ENCODE measurements at regions of chr20 and their contacts with region 1.

Region 1: DNA sequence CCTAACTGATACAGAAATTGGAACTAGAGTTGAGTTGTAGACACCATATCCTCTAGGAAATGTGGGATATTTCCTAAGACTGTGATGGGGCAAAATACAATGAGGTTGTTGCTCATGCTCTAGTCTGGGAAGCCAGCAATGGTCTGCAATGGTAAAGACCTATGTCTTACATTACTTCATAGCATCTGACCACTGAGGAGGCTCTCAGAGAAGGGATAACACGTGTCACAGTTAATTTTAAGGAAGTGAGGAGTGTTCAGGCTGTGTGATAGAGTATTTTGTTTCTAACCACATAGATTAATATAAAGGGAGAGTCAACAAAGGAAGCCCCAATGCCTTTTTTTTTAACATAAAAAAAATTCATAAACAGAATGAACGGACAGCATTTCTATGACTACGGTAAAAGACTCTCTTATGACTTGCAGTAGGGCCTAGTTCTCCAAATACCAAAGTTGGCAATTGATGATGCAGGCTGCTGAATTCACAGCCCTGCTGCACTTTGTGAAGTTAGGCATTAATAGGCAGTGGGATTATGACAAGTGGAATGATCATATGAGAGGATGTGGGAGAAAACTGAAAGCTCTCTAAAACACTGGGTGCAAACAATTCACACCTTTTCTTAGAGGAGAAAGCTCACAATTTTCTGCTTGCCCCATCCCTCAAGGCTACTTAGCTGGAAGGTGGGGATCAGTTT is 13.7 kb downstream of the KCNS1 start:
- DNase-seq: no peak
- ATAC-seq: no peak
- H3K4me3 ChIP-seq: no peak overlapping the region
- H3K27ac ChIP-seq: no peak overlapping the region
- H3K4me1 ChIP-seq: no peaks in the 10 kb centered on the region
- H3K27me3 ChIP-seq: no peaks in the 10 kb centered on the region
- CTCF ChIP-seq: no peak

Region 2: GRCh38 chr20:45011108-45011526 is 76.1 kb before region 1 on chr20:
- CTCF ChIA-PET with region 1: interaction called, 11 read pairs
- POLR2A ChIA-PET with region 1: no interaction called
- in situ Hi-C with region 1: no loop called
- intact Hi-C with region 1: loop called (anchors 10 kb)
- DNase-seq: peak; percentile 38
- ATAC-seq: peak; percentile 92
- H3K4me3 ChIP-seq: no peak overlapping the region
- H3K27ac ChIP-seq: no peak overlapping the region
- H3K4me1 ChIP-seq: 0 out of 2 replicates have a peak, but pooled peaks cover 3% of the 10 kb centered on the region
- H3K27me3 ChIP-seq: no peaks in the 10 kb centered on the region
- CTCF ChIP-seq: peak; percentile 79; the same call in 1 of the 2 replicates

Measured in Panc1 (cell line).